Common myeloid progenitor, CD34-positive (primary cell): ENCODE measurements at regions of chr20 and their contacts with region 1.

Region 1: DNA sequence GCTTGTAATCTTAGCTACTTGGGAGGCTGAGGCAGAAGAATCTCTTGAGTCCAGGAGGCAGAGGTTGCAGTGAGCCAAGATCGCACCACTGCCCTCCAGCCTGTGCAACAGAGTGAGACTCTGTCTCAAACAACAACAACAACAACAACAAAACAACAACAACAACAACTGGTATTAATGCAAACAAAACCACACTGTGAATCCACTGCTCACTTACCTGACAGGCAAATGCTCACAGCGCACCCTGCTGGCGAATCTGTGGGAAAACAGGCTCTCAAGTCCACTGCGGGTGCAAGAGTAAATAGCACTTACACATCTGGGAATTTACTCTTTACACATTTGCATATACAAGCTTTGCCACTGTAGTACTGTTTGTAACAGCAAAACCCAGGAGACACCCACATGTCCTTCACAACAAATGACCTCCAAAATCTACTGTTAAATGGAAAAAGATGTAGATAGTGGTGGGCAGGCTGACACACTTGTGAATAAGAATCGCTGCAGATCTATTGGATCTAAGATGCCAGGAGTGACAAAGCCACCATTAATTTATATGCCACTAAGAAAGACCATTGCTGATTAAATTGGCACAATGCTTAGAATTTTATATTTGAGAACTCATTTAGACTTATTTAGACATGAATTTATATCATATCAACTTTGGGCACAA is 29.3 kb downstream of the NSFL1C start:
- DNase-seq: peak; percentile 86 to 92 (median 91)
- H3K4me3 ChIP-seq: no peak overlapping the region
- H3K27ac ChIP-seq: no peak overlapping the region
- H3K4me1 ChIP-seq: peaks cover 15 to 20% (median 16%) of the 10 kb centered on the region in 4 experiments
- H3K27me3 ChIP-seq: no peaks in the 10 kb centered on the region

Region 2: DNA sequence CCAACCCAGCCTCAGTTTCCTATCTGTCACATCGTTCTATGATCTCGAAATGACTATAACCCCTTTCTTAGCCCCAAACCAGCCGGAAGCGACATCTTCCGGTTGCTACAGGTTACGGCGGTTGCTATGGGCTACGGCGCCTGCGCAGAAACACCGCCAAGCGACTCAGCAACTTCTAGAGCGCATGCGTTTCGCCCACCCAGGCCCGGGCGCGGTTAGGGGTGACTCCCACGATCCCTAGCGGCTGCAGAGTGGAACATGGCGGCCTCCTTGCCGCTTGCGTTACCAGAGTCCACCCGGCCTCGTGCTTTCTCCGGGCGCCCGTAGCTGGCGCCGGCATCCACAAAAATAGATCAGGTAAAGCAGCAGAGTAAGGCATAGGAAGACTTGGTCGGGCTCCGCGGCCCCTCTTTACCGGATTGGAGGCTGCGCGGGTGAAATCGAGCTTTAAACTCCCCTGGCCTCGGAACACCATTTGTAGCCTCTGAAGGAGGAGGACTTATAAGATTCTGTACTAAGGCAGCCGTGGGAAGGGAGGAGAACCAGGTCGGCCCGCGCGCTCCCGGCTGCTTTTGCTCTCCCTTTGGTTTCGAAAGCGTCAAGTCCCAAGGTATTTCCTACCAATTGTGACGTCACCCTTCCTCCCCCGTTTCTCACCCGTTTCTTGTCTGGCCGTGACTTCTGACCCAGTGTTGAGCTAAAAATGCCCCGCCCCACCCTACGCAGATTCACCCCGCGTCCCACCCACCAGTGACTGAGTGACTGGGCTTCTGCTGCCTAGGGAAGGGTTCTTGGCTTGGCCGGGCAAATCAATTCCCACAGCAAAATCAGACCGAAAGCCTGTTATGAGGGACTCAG is 112.0 kb before region 1 on chr20:
- CTCF ChIA-PET with region 1: interaction called, 57 read pairs
- POLR2A ChIA-PET with region 1: no interaction called
- DNase-seq: peak; percentile 96 to 98 (median 97)
- H3K4me3 ChIP-seq: peak overlapping the region; percentile 66 to 95 (median 82)
- H3K27ac ChIP-seq: peak overlapping the region; percentile 99
- H3K4me1 ChIP-seq: peaks cover 10 to 62% (median 43%) of the 10 kb centered on the region in 4 experiments
- H3K27me3 ChIP-seq: no peaks in the 10 kb centered on the region

Region 3: GRCh38 chr20:1383623-1384404 is 53.6 kb before region 1 on chr20:
- CTCF ChIA-PET with region 1: interaction called, 38 read pairs
- POLR2A ChIA-PET with region 1: no interaction called
- DNase-seq: no peak
- H3K4me3 ChIP-seq: no peak overlapping the region
- H3K27ac ChIP-seq: no peak overlapping the region
- H3K4me1 ChIP-seq: peaks cover 20 to 52% (median 33%) of the 10 kb centered on the region in 4 experiments
- H3K27me3 ChIP-seq: no peaks in the 10 kb centered on the region

Region 4: DNA sequence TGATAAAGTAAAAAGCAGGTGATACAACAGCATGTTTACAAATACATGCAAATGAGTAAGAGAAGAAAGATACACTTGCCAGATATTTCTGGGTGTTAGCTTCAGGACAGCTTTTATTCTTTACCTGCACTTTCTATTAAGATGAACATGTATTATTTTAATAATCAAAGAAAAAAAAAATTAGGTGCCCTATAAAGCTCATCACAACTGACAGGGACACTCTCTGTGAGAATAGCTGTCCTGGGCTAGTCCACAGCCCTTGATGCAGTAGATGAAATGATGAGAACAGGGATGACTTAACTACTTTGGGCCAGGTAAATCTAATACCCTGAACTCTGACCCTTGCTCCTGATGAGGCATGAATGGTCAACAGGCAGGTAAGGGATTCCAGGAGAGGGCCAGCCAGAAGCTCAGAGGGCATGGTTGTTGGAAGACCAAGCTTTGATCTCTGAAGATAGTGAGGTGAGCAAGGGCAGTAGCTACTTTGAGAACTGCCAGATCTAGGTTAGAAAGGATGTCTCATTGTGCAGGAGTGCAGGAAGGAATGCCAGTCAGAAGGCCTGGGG is 13.6 kb after region 1 on chr20:
- CTCF ChIA-PET with region 1: interaction called, 55 read pairs
- POLR2A ChIA-PET with region 1: no interaction called
- DNase-seq: peak in 2 of 3 donors; percentile 53 to 62
- H3K4me3 ChIP-seq: peak overlapping the region in 1 of 7 experiments; percentile 24
- H3K27ac ChIP-seq: no peak overlapping the region
- H3K4me1 ChIP-seq: no peaks in the 10 kb centered on the region
- H3K27me3 ChIP-seq: no peaks in the 10 kb centered on the region

Region 5: DNA sequence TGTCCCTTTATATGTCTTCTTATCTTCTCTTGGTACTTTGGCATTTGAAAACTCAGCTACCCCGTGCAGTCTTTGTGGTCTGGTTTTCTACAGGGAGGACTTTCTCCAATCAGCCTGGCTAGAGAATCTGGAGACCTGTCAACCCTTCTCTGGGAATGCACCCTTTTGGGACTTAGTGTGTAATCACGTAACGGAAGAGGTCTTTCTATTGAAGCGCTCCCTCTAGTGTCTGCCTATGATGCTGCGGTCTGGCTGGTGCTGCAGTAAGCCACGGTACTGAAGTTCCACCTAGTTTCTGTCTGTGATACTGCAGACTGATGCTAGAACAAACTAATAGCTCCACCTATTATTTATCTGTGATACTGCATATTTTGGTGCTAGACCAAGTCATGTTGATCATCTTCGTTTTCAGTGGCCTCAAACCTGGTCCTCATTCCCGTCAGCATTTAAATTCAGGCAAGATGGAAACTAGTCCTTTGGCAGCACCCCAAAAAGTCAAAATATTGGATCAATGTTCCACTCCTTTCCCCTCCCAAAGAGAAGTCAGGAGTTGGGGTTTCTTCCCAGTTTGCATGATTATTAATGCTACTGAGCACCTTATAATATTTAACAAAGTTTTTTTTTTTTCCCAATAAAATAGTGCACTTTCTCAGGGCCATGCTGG is 66.3 kb after region 1 on chr20:
- CTCF ChIA-PET with region 1: interaction called, 66 read pairs
- POLR2A ChIA-PET with region 1: no interaction called
- DNase-seq: peak; percentile 94 to 96 (median 96)
- H3K4me3 ChIP-seq: no peak overlapping the region
- H3K27ac ChIP-seq: no peak overlapping the region
- H3K4me1 ChIP-seq: peaks cover 0 to 12% (median 4%) of the 10 kb centered on the region in 4 experiments
- H3K27me3 ChIP-seq: no peaks in the 10 kb centered on the region

Region 6: DNA sequence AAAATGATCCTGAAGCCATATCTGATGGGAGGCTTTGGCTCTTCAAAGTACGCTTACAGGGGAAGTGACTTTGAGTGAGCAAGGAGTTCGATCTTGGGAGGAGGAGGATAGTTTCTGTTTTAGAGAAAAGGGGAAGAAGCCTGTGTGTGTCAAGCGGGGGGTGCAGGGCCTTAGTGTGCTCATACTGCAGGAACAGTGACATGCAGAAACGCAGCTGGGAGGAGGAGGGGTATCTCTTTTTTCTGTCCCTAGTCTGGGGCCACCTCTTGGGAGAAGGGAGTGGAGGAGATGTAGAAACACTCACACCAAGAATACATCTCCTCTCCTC is 100.3 kb after region 1 on chr20:
- CTCF ChIA-PET with region 1: no interaction called
- POLR2A ChIA-PET with region 1: no interaction called
- DNase-seq: peak; percentile 89 to 94 (median 92)
- H3K4me3 ChIP-seq: peak overlapping the region in 6 of 7 experiments; percentile 7 to 60 (median 28)
- H3K27ac ChIP-seq: peak overlapping the region in 1 of 2 experiments; percentile 62
- H3K4me1 ChIP-seq: peaks cover 5 to 30% (median 20%) of the 10 kb centered on the region in 4 experiments
- H3K27me3 ChIP-seq: no peaks in the 10 kb centered on the region

Region 7: GRCh38 chr20:1741309-1742048 is 304.1 kb after region 1 on chr20:
- CTCF ChIA-PET with region 1: no interaction called
- POLR2A ChIA-PET with region 1: no interaction called
- DNase-seq: peak; percentile 48 to 87 (median 78)
- H3K4me3 ChIP-seq: no peak overlapping the region
- H3K27ac ChIP-seq: peak overlapping the region in 1 of 2 experiments; percentile 49
- H3K4me1 ChIP-seq: peaks cover 4 to 12% (median 6%) of the 10 kb centered on the region in 4 experiments
- H3K27me3 ChIP-seq: no peaks in the 10 kb centered on the region

Region 8: GRCh38 chr20:1876975-1877608 is 439.7 kb after region 1 on chr20:
- CTCF ChIA-PET with region 1: no interaction called
- POLR2A ChIA-PET with region 1: no interaction called
- DNase-seq: peak in 1 of 3 donors; percentile 50
- H3K4me3 ChIP-seq: no peak overlapping the region
- H3K27ac ChIP-seq: no peak overlapping the region
- H3K4me1 ChIP-seq: peaks cover 0 to 5% (median 2%) of the 10 kb centered on the region in 4 experiments
- H3K27me3 ChIP-seq: peaks cover 0 to 15% (median 4%) of the 10 kb centered on the region in 5 experiments